Posterior vena cava (tissue), 2 donors: ENCODE measurements at regions of chr2 and their contacts with region 1.

Region 1: GRCh38 chr2:63819765-63820717 is 21.7 kb upstream of the UGP2 start:
- DNase-seq: no peak

Region 2: GRCh38 chr2:65562890-65563289 is 1742.8 kb after region 1 on chr2:
- intact Hi-C with region 1: loop called in 1 of 2 experiments (anchors 5 kb)
- DNase-seq: no peak